ENCODE measurements at regions of chr3 and their contacts with region 1.

Region 1: GRCh38 chr3:154758109-154758868 is 321.8 kb upstream of the MME start:
- DNase-seq: peak in 1 of 4 experiments; percentile 16
- ATAC-seq: peak; percentile 69; the same call in 2 of the 3 replicates
- H3K4me3 ChIP-seq: no peak overlapping the region
- H3K27ac ChIP-seq: no peak overlapping the region
- H3K4me1 ChIP-seq: no peaks in the 10 kb centered on the region; a peak in 1 of 5 replicates
- H3K27me3 ChIP-seq: no peaks in the 10 kb centered on the region
- CTCF ChIP-seq: peak in 2 of 3 experiments; percentile 5 to 61; a peak in 3 of 6 replicates
- EP300 ChIP-seq: no peak
- POLR2A ChIP-seq: no peak
- RAD21 ChIP-seq: peak; percentile 72 to 88

Region 2: GRCh38 chr3:154334973-154335420 is 423.3 kb before region 1 on chr3:
- CTCF ChIA-PET with region 1: no interaction called
- POLR2A ChIA-PET with region 1: no interaction called
- in situ Hi-C with region 1: no loop called
- intact Hi-C with region 1: loop called (anchors 10 kb)
- DNase-seq: peak in 3 of 4 experiments; percentile 20 to 32 (median 27)
- ATAC-seq: peak; percentile 70
- H3K4me3 ChIP-seq: no peak overlapping the region
- H3K27ac ChIP-seq: no peak overlapping the region
- H3K4me1 ChIP-seq: peaks cover 0 to 5% of the 10 kb centered on the region in 2 experiments; a peak in 2 of 5 replicates
- H3K27me3 ChIP-seq: no peaks in the 10 kb centered on the region; a peak in 1 of 5 replicates
- CTCF ChIP-seq: peak; percentile 11 to 59 (median 20); a peak in 3 of 6 replicates
- EP300 ChIP-seq: no peak
- POLR2A ChIP-seq: no peak
- RAD21 ChIP-seq: peak; percentile 30 to 41

Measured in K562 (cell line).